Activated T-helper 1 cell treated with anti-CD3 and anti-CD28 coated beads, Interleukin-12 subunit alpha, Interleukin-12 subunit beta, Interleukin-2, Interleukin-4 antibody, amounts not matched to agents 30 ng/mL and 10 ng/mL and 1 ng/mL, durations not matched to agents 14 hours and 24 hours and 36 hours (primary cell): ENCODE measurements at regions of chr10 and their contacts with region 1.

Region 1: DNA sequence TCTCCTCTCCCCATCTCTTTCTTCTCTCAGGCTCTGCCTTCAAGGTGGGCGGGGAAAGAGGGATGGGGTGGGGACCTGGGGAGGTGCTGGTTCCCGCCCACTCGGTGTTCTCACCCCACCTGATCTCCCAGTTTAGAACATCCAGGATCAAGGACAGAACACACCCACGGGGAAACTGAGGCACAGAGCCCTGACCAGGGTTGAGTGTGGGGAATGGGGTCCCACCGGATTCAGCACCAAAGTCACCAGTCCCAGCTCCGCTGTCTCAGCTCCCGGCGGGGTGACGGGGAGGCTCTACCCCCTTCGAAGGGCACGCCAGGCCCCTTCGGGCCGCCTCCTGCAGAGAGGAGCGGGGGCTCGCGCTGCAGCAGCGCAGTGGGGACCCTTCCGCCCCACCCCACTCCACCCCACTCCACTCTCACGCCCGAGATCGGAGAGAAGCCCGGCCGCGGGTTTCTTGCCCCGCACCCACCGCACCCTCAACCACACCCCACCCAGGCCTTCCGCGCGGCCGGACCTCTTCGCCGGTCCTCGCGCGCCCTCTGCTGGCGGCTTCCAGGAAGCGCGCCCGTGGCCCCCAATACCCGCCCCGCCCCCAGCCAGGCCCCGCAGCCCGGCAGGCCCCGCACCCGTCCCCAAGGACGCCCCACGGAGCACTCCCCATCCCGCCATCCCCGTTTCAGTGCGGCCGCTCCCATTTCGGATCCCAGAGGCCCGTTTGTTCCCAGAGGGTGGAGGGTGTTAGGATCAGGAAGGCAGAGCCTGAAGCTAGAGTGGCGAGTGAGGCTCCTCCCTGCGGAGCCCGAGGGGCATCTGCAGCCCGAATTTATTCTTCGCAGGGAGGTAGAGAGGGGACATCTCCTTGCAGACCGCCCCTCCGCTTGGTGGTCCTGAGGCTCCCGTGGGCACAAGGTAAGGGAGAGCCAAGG is 18.0 kb downstream of the POLL start:
- DNase-seq: peak; percentile 61
- H3K4me3 Mint-ChIP-seq: peak overlapping the region; percentile 68
- H3K27ac Mint-ChIP-seq: no peak overlapping the region
- H3K4me1 Mint-ChIP-seq: no peaks in the 10 kb centered on the region
- H3K27me3 Mint-ChIP-seq: peaks cover 41% of the 10 kb centered on the region

Region 2: DNA sequence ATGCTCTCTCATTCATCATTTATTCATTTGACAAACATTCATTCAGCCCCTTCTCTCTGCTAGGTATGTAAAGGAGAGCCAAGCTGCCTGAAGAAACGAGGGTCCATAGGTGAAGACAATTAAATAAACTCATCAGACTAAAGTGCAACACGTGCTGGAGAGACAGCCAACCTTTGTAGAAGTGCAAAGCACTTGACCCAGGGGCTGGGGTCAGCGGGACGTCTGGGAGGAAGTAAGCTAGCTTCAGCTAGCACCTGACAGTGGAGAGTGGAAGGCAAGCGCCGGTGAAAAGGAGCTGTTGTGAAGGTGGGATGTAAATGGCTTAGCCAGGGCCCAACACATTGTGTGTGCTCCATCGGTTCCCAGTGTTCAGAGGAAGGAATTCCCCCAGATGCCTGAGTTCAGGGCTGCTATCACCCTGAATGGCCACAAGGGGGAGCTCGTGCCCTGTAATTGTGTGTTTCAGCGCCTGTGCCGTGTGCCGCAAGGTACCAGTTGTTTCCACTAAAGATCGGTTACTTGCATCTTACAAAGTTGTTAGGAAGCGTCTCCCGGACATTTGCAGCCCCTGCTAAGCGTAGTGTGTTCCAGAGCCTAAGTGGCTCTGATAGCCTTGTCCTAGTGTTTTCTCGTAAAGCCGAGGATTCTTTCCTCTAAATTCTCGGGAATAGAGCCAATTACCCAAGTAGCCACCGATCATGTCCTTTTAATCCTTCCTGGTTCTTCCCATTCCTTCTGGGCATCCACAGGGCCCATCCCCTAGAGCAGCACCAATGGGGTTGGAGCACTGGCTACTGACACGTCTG is 408.4 kb before region 1 on chr10:
- intact Hi-C with region 1: loop called (anchors 1 kb)
- DNase-seq: peak; percentile 44
- H3K4me3 Mint-ChIP-seq: no peak overlapping the region
- H3K27ac Mint-ChIP-seq: peak overlapping the region; percentile 30
- H3K4me1 Mint-ChIP-seq: peaks cover 11% of the 10 kb centered on the region
- H3K27me3 Mint-ChIP-seq: peaks cover 63% of the 10 kb centered on the region

Region 3: GRCh38 chr10:101272229-101272868 is 297.8 kb before region 1 on chr10:
- intact Hi-C with region 1: loop called (anchors 1 kb)
- DNase-seq: peak; percentile 40
- H3K4me3 Mint-ChIP-seq: no peak overlapping the region
- H3K27ac Mint-ChIP-seq: no peak overlapping the region
- H3K4me1 Mint-ChIP-seq: no peaks in the 10 kb centered on the region
- H3K27me3 Mint-ChIP-seq: peaks cover 19% of the 10 kb centered on the region

Region 4: GRCh38 chr10:101297901-101298486 is 272.1 kb before region 1 on chr10:
- intact Hi-C with region 1: loop called (anchors 5 kb)
- DNase-seq: peak; percentile 46
- H3K4me3 Mint-ChIP-seq: no peak overlapping the region
- H3K27ac Mint-ChIP-seq: no peak overlapping the region
- H3K4me1 Mint-ChIP-seq: no peaks in the 10 kb centered on the region
- H3K27me3 Mint-ChIP-seq: peaks cover 48% of the 10 kb centered on the region

Region 5: GRCh38 chr10:101467286-101467770 is 102.8 kb before region 1 on chr10:
- intact Hi-C with region 1: loop called (anchors 1 kb)
- DNase-seq: peak; percentile 19
- H3K4me3 Mint-ChIP-seq: no peak overlapping the region
- H3K27ac Mint-ChIP-seq: no peak overlapping the region
- H3K4me1 Mint-ChIP-seq: peaks cover 10% of the 10 kb centered on the region
- H3K27me3 Mint-ChIP-seq: no peaks in the 10 kb centered on the region

Region 6: DNA sequence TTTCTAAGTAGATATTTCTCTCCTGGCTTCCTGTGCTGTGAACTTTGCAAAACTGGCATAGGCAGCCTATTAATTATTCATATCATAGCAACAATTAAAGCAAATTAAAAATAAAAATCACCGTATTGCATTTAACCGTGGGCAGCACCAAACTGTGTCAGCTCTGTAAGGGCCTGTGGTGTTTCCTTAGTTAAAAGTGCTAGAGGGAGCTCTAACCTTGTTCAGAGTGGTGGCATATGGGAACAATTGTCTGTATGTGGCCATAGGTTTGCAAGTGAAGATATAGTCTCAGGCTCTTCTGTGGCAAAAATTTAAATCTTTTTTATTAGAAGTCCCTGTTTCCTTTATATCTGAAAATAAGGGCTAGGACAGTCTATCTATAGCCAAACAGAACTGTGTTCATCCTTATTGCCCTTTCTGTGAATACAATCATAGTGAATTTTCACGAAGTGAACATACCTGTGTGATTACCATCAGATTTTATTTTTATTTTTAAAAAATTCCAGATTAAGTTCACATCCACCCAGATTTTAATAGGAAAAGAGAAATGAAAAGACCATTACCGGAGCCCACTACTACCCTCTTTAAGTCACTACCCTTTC is 74.7 kb before region 1 on chr10:
- intact Hi-C with region 1: no loop called
- DNase-seq: no peak
- H3K4me3 Mint-ChIP-seq: no peak overlapping the region
- H3K27ac Mint-ChIP-seq: no peak overlapping the region
- H3K4me1 Mint-ChIP-seq: no peaks in the 10 kb centered on the region
- H3K27me3 Mint-ChIP-seq: no peaks in the 10 kb centered on the region

Region 7: DNA sequence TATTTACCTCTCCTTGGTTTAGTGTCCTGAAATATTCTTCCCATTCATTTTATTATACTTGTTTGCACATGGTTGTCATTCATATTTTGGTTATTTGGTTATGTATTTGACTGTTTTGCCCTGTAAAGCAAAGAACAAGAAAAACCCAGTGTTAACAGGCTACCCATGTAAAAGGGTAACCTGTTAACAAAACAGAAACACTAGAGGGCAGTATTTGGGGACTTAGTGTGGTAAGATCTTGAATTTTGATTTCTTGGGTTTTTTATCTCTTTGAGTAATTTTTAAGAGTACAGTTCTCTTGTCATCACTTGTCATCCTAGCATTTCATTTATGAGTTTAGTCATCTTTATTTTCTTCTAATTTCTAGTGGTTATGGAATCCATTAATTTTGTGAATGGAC is 33.3 kb before region 1 on chr10:
- intact Hi-C with region 1: loop called (anchors 1 kb)
- DNase-seq: no peak
- H3K4me3 Mint-ChIP-seq: no peak overlapping the region
- H3K27ac Mint-ChIP-seq: no peak overlapping the region
- H3K4me1 Mint-ChIP-seq: peaks cover 5% of the 10 kb centered on the region
- H3K27me3 Mint-ChIP-seq: no peaks in the 10 kb centered on the region

Region 8: GRCh38 chr10:101889256-101890210 is 319.4 kb after region 1 on chr10:
- intact Hi-C with region 1: no loop called
- DNase-seq: peak; percentile 52
- H3K4me3 Mint-ChIP-seq: no peak overlapping the region
- H3K27ac Mint-ChIP-seq: no peak overlapping the region
- H3K4me1 Mint-ChIP-seq: peaks cover 9% of the 10 kb centered on the region
- H3K27me3 Mint-ChIP-seq: no peaks in the 10 kb centered on the region